Tibial artery (tissue), 4 donors: ENCODE measurements at regions of chr3 and their contacts with region 1.

Region 1: GRCh38 chr3:39154280-39155021 is 1.1 kb upstream of the CSRNP1 start:
- DNase-seq: peak in 1 of 2 donors; percentile 80
- H3K4me3 ChIP-seq: peak overlapping the region; percentile 86 to 94
- H3K27ac ChIP-seq: peak overlapping the region; percentile 98 to 100
- H3K4me1 ChIP-seq: peaks cover 0 to 39% (median 29%) of the 10 kb centered on the region in 4 donors
- H3K27me3 ChIP-seq: no peaks in the 10 kb centered on the region
- CTCF ChIP-seq: no peak

Region 2: GRCh38 chr3:39177708-39178332 is 23.4 kb after region 1 on chr3:
- intact Hi-C with region 1: loop called (anchors 2 kb)
- DNase-seq: peak; percentile 89 to 97
- H3K4me3 ChIP-seq: peak overlapping the region; percentile 47 to 55
- H3K27ac ChIP-seq: peak overlapping the region; percentile 91 to 93
- H3K4me1 ChIP-seq: peaks cover 0 to 48% (median 36%) of the 10 kb centered on the region in 4 donors
- H3K27me3 ChIP-seq: no peaks in the 10 kb centered on the region
- CTCF ChIP-seq: peak in 1 of 2 experiments; percentile 14